CD8-positive, alpha-beta memory T cell (primary cell): ENCODE measurements at regions of chr3 and their contacts with region 1.

Region 1: DNA sequence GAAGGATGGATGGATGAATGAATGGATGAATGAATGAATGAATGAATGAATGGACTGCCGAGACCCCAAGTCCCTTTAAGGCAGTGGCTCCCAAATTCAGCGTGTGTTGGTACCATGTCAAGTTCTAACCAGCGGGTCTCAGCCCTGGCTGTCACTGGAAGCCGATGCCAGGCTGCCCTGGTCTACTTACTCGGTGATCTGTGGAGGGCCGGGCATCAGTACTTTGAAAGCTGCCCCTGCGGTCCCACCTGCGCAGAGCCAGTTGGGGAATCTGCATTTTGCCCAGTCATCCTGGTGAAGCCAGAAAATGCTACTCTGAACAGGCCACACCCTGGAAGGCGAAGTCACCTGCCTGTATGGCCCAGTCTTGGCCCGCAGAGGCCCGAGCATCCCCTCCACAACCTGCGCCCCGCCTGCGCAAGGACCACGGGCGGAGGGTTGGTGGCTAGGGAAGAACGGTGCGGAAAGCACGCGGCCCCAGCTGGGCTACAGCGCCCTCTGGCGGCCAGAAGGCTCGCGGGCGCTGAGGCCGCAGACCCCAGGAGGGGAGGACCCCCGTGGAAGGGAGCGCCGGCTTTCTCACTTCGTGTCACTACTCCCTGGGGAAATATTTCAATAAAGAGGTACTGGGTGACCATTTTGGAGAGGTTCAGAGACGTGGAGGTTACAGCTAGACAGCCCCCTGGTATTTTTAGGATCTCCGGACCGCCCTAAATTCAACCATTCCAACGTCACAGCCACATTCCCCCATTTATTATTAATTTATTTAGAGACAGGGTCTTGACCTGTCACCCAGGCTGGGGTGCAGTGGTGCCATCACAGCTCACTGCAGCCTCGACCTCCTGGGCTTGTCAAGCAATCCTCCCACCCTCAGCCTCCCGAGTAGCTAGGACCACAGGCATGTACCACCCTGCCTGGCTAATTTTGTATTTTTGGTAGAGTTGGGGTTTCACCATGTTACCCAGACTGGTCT is 34.9 kb downstream of the PRKCD start:
- DNase-seq: peak; percentile 43 to 68 (median 44)
- H3K4me3 ChIP-seq: no peak overlapping the region
- H3K4me3 Mint-ChIP-seq: no peak overlapping the region
- H3K27ac ChIP-seq: no peak overlapping the region
- H3K27ac Mint-ChIP-seq: no peak overlapping the region
- H3K4me1 ChIP-seq: peaks cover 3% of the 10 kb centered on the region
- H3K4me1 Mint-ChIP-seq: peaks cover 7 to 11% (median 8%) of the 10 kb centered on the region in 3 donors
- H3K27me3 ChIP-seq: no peaks in the 10 kb centered on the region
- H3K27me3 Mint-ChIP-seq: peaks cover 0 to 3% of the 10 kb centered on the region in 2 donors

Region 2: DNA sequence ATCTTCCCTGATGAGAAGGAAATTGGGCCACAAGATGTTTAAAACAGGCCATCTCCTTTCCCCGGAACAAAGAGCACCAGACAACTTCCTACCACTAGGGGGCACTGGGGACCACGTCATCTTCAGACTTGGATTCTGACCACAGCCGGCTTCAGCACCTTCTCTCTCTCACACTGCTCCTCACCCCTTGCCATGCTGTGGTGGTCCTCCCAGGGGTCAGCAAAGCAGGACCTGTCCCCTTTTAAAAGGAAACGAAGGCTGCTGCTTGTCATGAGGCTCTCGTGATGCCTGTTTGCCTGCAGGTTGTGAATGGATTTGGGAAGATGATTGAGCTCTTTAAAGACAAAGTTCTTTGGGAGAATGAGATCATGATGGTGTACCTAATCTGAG is 81.9 kb before region 1 on chr3:
- CTCF ChIA-PET with region 1: interaction called, 99 read pairs
- POLR2A ChIA-PET with region 1: interaction called, 4 read pairs
- DNase-seq: peak; percentile 65 to 82 (median 73)
- H3K4me3 ChIP-seq: no peak overlapping the region
- H3K4me3 Mint-ChIP-seq: no peak overlapping the region
- H3K27ac ChIP-seq: no peak overlapping the region
- H3K27ac Mint-ChIP-seq: no peak overlapping the region
- H3K4me1 ChIP-seq: peaks cover 11% of the 10 kb centered on the region
- H3K4me1 Mint-ChIP-seq: peaks cover 0 to 6% (median 2%) of the 10 kb centered on the region in 3 donors
- H3K27me3 ChIP-seq: no peaks in the 10 kb centered on the region
- H3K27me3 Mint-ChIP-seq: no peaks in the 10 kb centered on the region

Region 3: DNA sequence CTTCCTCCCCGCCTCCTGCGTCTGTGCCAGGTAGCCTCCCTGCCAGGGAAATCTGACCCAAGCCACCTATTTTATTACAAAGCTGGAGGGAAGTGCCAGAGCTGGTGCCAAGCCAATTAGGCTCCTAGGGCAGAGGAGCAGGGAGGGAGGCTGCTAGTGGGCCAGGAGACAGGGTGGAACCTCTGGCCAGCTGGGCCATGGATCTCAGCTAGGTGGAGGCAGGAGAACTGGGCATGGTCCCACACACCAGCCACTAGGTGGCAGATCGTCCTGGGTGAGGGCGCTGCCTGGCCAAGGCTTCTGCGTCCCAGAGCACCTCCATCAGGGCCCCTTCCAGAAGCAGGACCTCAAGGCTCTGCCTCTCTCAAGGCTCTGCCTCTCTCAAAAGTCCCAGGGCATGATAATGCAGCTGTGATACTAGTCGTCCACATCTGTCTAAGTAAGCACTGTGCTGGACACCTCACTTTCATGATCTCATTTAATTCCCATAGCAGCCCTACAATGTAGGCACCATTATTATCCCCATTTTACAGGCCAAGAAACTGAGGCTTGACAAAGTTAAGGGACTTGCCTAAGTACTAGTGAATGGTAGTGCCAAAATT is 61.2 kb before region 1 on chr3:
- CTCF ChIA-PET with region 1: interaction called, 50 read pairs
- POLR2A ChIA-PET with region 1: interaction called, 3 read pairs
- DNase-seq: peak; percentile 33 to 75 (median 36)
- H3K4me3 ChIP-seq: no peak overlapping the region
- H3K4me3 Mint-ChIP-seq: peak overlapping the region in 1 of 7 donors; percentile 18
- H3K27ac ChIP-seq: no peak overlapping the region
- H3K27ac Mint-ChIP-seq: peak overlapping the region in 2 of 8 donors; percentile 70
- H3K4me1 ChIP-seq: peaks cover 10% of the 10 kb centered on the region
- H3K4me1 Mint-ChIP-seq: peaks cover 14 to 20% (median 18%) of the 10 kb centered on the region in 3 donors
- H3K27me3 ChIP-seq: no peaks in the 10 kb centered on the region
- H3K27me3 Mint-ChIP-seq: peaks cover 0 to 4% of the 10 kb centered on the region in 2 donors

Region 4: DNA sequence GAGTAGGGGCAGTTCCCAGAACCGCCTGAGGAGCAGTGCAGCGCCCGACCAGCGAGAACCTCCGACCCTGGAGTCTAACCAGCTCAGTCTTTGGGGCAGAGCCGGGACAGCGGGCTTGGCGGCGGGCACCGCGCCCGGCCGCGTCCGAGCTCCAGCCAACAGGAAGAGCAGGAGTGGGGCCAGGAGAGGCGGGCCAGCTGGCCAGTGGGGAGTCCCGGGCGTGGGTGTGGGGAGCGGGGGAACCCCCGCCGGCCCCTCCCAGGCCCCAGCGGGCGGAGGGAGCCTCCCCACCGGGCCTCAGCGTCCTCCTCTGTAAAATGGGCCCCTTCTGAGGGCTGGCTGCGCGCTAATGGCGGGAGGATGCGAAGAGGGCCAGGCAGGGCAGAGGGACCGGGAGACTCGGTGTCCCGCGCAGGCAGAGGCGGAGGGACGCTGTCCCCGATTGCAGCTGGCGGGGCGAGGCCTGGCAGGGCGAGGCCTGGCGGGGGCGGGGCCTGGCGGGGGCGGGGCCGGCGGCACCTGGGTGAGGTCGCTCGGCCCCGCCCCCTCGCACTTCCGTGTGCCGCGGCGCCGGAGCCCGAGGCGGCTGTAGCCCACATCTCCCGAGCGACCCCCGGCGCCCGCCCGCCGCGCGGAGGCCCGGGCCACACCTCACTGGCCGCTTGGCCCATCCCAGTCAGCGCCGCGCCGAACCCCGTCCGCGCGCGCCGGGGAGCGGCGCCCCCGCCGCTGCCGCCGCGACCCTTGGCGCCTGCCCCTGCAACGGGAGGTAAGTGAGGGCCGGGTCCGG is 35.0 kb before region 1 on chr3 and contains the start of gene PRKCD:
- CTCF ChIA-PET with region 1: interaction called, 16 read pairs
- POLR2A ChIA-PET with region 1: no interaction called
- DNase-seq: peak; percentile 72 to 88 (median 74)
- H3K4me3 ChIP-seq: peak within 1 kb of the TSS; percentile 75
- H3K4me3 Mint-ChIP-seq: peak within 1 kb of the TSS; percentile 82 to 97 (median 95)
- H3K27ac ChIP-seq: peak within 1 kb of the TSS; percentile 61
- H3K27ac Mint-ChIP-seq: peak within 1 kb of the TSS; percentile 58 to 94 (median 89)
- H3K4me1 ChIP-seq: peaks cover 25% of the 10 kb centered on the region
- H3K4me1 Mint-ChIP-seq: peaks cover 22 to 26% (median 26%) of the 10 kb centered on the region in 3 donors
- H3K27me3 ChIP-seq: peaks cover 5% of the 10 kb centered on the region
- H3K27me3 Mint-ChIP-seq: peaks cover 1 to 4% of the 10 kb centered on the region in 2 donors
- total RNA-seq, gene PRKCD: 27.2 to 27.3 TPM